BJ (cell line): ENCODE measurements at regions of chr11 and their contacts with region 1.

Region 1: DNA sequence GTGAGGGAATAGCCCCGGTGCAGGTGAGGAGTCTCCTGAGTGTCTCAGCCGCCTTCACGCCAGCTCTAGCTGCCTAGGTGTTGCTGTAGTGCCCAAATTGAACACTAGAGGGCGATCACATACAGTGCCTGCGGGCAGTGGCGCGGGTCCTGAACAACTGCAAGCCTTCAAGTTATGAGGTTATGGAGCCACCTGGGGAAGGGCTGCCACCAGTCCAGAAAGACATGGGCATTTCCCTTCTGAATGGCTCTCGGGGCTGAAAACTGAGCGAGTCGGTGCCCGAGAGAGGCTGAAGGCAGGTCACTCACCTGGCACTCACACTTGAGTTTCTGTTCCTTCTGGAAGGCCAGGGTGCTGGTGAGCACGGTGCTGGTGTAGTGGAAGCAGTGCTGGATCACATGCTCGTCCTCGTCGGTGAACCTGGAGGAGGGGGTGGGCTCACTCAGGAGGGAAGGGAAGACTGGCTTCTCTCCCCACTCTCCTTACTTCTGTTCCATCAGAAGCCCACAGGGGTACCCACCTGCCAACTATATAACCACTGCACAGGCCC is 88.4 kb downstream of the PDE2A start:
- DNase-seq: no peak
- H3K4me3 ChIP-seq: no peak overlapping the region
- H3K27me3 ChIP-seq: peaks cover 45% of the 10 kb centered on the region
- CTCF ChIP-seq: peak; percentile 87

Region 2: GRCh38 chr11:72573072-72573854 is 12.6 kb before region 1 on chr11:
- CTCF ChIA-PET with region 1: interaction called, 54 read pairs
- POLR2A ChIA-PET with region 1: no interaction called
- DNase-seq: no peak
- H3K4me3 ChIP-seq: no peak overlapping the region
- H3K27me3 ChIP-seq: peaks cover 2% of the 10 kb centered on the region; the same call in 1 of the 2 replicates
- CTCF ChIP-seq: peak; percentile 72

Region 3: GRCh38 chr11:72598906-72599305 is 13.1 kb after region 1 on chr11:
- CTCF ChIA-PET with region 1: interaction called, 21 read pairs
- POLR2A ChIA-PET with region 1: no interaction called
- DNase-seq: no peak
- H3K4me3 ChIP-seq: no peak overlapping the region
- H3K27me3 ChIP-seq: peaks cover 28% of the 10 kb centered on the region
- CTCF ChIP-seq: peak; percentile 54

Region 4: DNA sequence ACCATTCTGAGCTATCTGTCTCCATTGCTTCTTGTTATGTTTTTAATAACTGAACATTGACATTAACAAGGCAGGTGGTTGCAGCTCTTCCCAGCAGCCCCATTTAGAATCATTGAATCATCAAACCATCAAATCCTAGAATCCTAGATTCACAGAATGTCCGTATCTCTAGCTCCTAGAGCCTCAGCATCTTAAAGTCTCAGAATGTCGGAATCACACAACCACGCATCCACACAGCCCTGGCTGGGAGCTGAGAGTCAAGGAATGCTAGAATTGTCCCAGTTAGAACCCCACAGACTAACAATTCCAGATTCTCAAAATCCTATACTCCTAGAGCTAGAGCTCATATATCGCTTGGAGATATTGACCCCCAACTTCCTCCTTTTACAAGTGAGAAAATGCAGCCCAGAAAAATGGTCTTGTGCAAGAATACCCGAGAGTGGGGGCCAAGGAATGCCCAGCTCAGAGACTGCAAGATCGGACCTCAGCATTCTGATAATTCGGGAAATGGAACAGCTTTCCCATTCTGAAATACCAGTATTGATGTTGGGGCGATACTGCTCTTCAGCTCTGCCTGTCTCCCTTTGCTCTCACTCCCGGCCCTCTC is 49.6 kb after region 1 on chr11:
- CTCF ChIA-PET with region 1: interaction called, 30 read pairs
- POLR2A ChIA-PET with region 1: no interaction called
- DNase-seq: no peak
- H3K4me3 ChIP-seq: no peak overlapping the region
- H3K27me3 ChIP-seq: peaks cover 29% of the 10 kb centered on the region
- CTCF ChIP-seq: no peak

Region 5: GRCh38 chr11:72642884-72643511 is 57.2 kb after region 1 on chr11:
- CTCF ChIA-PET with region 1: interaction called, 57 read pairs
- POLR2A ChIA-PET with region 1: no interaction called
- DNase-seq: no peak
- H3K4me3 ChIP-seq: peak overlapping the region; percentile 39
- H3K27me3 ChIP-seq: peaks cover 25% of the 10 kb centered on the region
- CTCF ChIP-seq: peak; percentile 74

Region 6: DNA sequence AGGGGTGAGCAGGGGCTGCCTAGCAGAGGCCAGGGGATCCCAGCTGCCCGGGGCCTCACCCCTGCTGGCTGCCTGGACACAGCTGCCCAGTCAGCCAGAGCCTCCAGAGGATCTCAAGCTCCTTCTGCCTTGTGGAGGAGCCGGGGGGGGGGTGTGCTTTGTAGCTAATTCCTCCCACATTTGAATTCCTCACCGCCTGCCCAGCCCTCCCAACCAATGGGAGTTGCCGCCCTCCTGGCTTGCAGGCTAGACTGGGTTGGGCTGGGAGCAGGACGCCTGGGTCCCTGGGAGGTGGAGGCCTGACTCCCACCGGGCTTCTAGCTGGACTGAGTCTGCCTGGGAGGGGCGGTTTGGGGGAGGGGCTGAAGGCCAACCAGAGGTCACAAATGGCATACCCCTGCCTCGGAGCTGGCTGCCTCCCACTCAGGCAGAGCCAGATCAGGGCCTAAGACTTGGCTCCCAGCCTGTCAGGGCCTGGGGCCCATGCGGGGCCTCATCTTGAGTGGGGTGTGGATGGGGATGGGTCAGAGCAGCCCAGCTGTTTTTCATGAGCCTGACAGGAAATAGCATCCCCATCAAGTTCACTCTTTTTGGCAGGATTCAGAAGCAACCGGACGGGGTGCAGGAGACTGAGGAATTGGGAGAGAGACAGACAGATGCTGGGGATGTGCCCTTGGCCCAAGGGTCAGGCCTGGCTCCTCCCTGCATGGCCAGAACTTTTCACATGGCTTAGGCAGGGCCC is 117.6 kb after region 1 on chr11:
- CTCF ChIA-PET with region 1: interaction called, 10 read pairs
- POLR2A ChIA-PET with region 1: no interaction called
- DNase-seq: peak; percentile 48
- H3K4me3 ChIP-seq: no peak overlapping the region
- H3K27me3 ChIP-seq: no peaks in the 10 kb centered on the region
- CTCF ChIP-seq: no peak